HepG2 (cell line): ENCODE measurements at regions of chr17 and their contacts with region 1.

Region 1: DNA sequence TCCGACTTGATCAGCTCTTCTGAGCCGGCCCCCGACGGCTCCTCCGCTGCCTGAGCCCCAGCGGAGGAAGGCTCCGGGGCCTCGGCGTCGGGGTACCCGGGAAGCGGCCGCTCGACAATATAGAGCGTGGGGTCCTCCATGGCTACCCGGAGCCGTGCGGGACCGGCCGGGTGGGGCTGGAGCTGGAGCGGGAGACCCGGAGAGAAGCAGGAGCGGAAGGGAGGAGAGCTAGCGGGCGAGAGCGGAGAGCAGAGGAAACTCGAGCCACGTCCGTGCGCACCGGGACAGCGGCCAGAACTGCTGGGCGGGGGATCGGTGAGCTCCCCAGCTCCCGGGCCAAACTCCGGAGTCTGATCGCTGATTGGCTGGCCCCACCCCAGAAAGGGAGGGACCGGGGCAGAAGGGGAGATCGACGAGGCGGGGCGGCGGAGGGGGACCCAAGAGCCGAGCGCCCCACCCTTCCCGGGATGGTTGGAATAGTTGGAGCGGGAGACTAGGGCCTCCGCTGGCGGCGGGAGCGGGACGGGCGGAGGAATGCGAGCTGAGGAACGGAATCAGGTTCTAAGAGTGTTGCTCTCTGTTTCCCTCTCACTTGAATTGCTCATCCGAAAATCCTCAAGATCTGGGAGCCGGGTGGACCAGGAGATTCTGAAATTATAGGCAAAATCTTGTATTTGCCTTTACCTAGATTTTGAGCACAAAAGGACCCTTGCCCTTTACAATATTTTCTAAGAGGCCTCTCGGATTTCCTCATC is at the start of gene CAVIN1:
- DNase-seq: peak; percentile 90
- ATAC-seq: peak; percentile 84
- H3K4me3 ChIP-seq: peak within 1 kb of the TSS; percentile 78 to 95 (median 88)
- H3K27ac ChIP-seq: peak within 1 kb of the TSS; percentile 7
- H3K4me1 ChIP-seq: peaks cover 47% of the 10 kb centered on the region
- H3K27me3 ChIP-seq: no peaks in the 10 kb centered on the region; a peak in 1 of 5 replicates
- CTCF ChIP-seq: no peak; the same call in 1 of the 2 replicates
- EP300 ChIP-seq: 0 out of 4 replicates have a peak, but pooled peaks of 1 of the 2 experiments have one; percentile 28
- POLR2A ChIP-seq: peak; percentile 90 to 94
- RAD21 ChIP-seq: no peak
- total RNA-seq, gene CAVIN1: 25.5 and 26.0 TPM in 2 replicates

Region 2: DNA sequence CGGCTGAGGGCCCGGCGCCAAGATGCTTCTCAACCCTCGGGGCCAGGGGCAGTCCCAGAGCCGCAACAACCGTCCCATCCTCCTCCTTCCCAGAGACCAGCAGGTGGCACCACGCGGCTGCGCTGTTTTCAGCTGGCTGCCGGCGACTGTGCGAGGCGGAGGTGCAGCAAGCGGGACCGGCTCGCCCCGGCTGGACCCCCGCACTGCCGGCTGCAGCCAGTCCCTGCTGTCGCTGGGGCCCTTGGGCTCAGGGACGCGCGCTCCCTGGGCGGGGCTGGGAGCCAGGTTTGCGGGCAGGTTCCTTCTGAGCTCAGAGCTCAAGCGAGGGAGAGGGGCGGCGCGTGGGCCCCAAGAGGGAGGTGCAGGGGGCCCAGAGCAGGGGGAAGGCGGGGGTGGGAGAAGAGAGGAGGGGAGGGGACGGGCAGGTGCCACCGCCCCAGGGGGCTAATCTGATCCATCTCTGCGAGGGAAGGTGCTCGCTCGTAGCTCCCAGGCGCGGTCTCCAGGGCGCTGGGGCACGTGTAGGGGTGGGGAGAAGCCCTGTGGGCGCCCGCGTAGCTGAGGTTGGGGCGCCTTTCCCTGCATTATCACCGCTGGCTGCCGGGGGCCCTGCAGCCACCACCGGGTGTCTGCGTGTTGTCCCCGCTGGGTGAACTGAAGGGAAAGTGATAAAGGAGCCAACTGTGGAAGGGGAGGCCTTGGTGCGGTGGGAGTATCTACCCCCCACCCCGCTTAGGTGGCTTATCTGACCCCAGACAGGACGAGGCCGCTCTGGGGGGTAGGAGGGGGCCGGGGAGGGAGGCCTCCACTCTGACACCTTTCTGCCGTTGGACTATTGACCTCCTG is 110.6 kb before region 1 on chr17:
- CTCF ChIA-PET with region 1: no interaction called
- POLR2A ChIA-PET with region 1: interaction called, 13 read pairs
- in situ Hi-C with region 1: no loop called
- intact Hi-C with region 1: no loop called
- DNase-seq: peak; percentile 80
- ATAC-seq: peak; percentile 83
- H3K4me3 ChIP-seq: peak overlapping the region; percentile 47 to 65 (median 51)
- H3K27ac ChIP-seq: peak overlapping the region; percentile 73
- H3K4me1 ChIP-seq: peaks cover 90% of the 10 kb centered on the region
- H3K27me3 ChIP-seq: no peaks in the 10 kb centered on the region
- CTCF ChIP-seq: peak; percentile 96
- EP300 ChIP-seq: peak in 1 of 2 experiments; percentile 13; a peak in 1 of 4 replicates
- POLR2A ChIP-seq: peak in 1 of 2 experiments; percentile 56; a peak in 1 of 4 replicates
- RAD21 ChIP-seq: peak; percentile 92

Region 3: DNA sequence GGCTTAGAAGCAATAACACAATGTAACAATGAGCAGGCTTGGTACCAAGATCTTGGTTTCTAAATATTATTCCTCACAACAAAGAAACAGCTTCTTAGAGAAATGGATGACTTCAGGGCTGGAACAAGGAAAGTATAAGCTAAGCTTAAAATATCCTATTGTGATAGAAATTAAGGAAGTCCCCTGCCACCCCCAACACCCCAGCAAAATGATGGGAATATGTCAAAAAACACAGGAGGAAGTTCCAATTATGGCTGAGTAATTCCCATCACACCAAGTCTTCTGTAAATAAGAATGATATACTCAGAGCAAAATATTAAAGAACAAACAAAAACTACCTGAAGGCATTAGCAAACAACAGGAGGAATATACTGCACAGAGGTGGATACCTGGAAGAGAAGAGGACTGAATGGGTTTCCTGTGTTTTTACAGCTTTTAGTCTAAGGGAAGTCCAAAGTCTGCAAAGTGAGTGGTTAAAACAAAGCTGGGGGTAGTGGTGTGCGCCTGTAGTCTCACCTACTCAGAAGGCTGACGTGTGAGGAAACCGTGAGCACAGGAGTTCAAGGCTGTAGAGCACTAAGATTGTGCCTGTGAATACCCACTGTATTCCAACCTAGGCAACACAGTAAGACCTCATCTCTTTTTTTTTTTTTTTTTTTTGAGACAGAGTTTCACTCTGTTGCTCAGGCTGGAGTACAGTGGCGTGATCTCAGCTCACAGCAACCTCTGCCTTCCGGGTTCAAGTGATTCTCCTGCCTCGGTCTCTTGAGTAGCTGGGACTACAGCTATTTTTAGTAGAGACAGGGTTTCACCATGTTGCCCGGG is 18.4 kb after region 1 on chr17:
- CTCF ChIA-PET with region 1: interaction called, 3 read pairs
- POLR2A ChIA-PET with region 1: interaction called, 11 read pairs
- in situ Hi-C with region 1: no loop called
- intact Hi-C with region 1: no loop called
- DNase-seq: peak; percentile 89
- ATAC-seq: peak; percentile 92
- H3K4me3 ChIP-seq: peak overlapping the region in 2 of 3 experiments; percentile 32 to 48; a peak in 4 of 6 replicates
- H3K27ac ChIP-seq: peak overlapping the region; percentile 58
- H3K4me1 ChIP-seq: peaks cover 42% of the 10 kb centered on the region
- H3K27me3 ChIP-seq: no peaks in the 10 kb centered on the region
- CTCF ChIP-seq: no peak
- EP300 ChIP-seq: peak; percentile 26 to 65; a peak in 2 of 4 replicates
- POLR2A ChIP-seq: peak in 1 of 2 experiments; percentile 46; a peak in 1 of 4 replicates
- RAD21 ChIP-seq: no peak

Region 4: DNA sequence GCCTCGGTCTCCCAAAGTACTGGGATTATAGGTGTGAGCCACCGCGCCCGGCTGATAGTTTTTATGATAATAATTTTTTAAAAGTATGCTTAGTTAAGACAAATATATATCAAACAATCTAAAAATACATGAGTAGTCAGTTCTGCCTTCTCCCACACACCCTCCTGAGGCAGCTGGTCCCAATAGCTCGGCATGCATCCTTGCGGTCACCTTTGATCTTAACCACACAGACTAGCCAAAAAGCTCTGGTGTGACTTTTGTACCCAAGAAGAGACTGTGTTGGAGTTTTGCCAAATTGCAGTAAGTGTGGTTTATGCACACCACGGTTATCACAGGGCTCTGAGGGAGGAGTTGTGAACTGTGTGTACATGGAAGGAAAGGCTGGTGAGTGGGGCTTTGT is 61.2 kb after region 1 on chr17:
- CTCF ChIA-PET with region 1: interaction called, 3 read pairs
- POLR2A ChIA-PET with region 1: interaction called, 10 read pairs
- in situ Hi-C with region 1: no loop called
- intact Hi-C with region 1: loop called (anchors 10 kb)
- DNase-seq: peak; percentile 99
- ATAC-seq: peak; percentile 96
- H3K4me3 ChIP-seq: no peak overlapping the region
- H3K27ac ChIP-seq: peak overlapping the region; percentile 53
- H3K4me1 ChIP-seq: peaks cover 49% of the 10 kb centered on the region
- H3K27me3 ChIP-seq: no peaks in the 10 kb centered on the region
- CTCF ChIP-seq: no peak
- EP300 ChIP-seq: peak; percentile 6 to 88; a peak in 2 of 4 replicates
- POLR2A ChIP-seq: no peak
- RAD21 ChIP-seq: peak; percentile 29; the same call in 1 of the 2 replicates